CD4-positive, alpha-beta T cell (primary cell): ENCODE measurements at regions of chr1 and their contacts with region 1.

Region 1: GRCh38 chr1:151934048-151934493 is 24.8 kb upstream of the THEM4 start:
- DNase-seq: peak in 12 of 14 experiments; percentile 16 to 84 (median 31)
- ATAC-seq: peak; percentile 88
- H3K4me3 ChIP-seq: no peak overlapping the region
- H3K4me3 Mint-ChIP-seq: no peak overlapping the region
- H3K27ac ChIP-seq: no peak overlapping the region
- H3K27ac Mint-ChIP-seq: no peak overlapping the region
- H3K4me1 ChIP-seq: no peaks in the 10 kb centered on the region
- H3K4me1 Mint-ChIP-seq: peaks cover 6% of the 10 kb centered on the region
- H3K27me3 ChIP-seq: no peaks in the 10 kb centered on the region
- H3K27me3 Mint-ChIP-seq: no peaks in the 10 kb centered on the region
- CTCF ChIP-seq: peak; percentile 97

Region 2: GRCh38 chr1:151898513-151898991 is 35.5 kb before region 1 on chr1:
- CTCF ChIA-PET with region 1: interaction called, 15 read pairs
- POLR2A ChIA-PET with region 1: interaction called, 3 read pairs
- intact Hi-C with region 1: no loop called
- DNase-seq: peak; percentile 48 to 86 (median 68)
- ATAC-seq: peak; percentile 91
- H3K4me3 ChIP-seq: peak overlapping the region; percentile 39
- H3K4me3 Mint-ChIP-seq: peak overlapping the region; percentile 83
- H3K27ac ChIP-seq: peak overlapping the region; percentile 74 to 81
- H3K27ac Mint-ChIP-seq: peak overlapping the region; percentile 96
- H3K4me1 ChIP-seq: peaks cover 64% of the 10 kb centered on the region
- H3K4me1 Mint-ChIP-seq: peaks cover 79% of the 10 kb centered on the region
- H3K27me3 ChIP-seq: no peaks in the 10 kb centered on the region
- H3K27me3 Mint-ChIP-seq: no peaks in the 10 kb centered on the region
- CTCF ChIP-seq: no peak

Region 3: DNA sequence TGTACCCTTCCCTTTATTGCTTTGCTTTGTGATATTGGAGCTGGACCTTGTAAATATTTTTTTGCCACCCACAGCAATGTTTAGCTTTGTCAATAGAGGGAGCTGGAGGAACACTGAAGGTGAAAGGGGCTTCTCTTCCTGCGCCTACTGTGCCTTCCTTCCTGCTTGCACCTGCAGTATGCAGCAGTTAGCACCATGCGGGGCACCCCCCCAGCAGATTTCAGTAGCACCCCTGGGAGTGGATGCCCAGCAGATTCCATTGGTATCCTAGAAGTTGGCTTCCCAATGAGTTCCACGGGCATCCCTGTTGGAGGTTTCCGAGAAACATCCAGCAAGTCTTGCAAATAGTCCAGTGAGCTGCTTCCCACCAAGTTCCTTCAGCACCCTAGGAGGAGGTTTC is 34.0 kb after region 1 on chr1:
- CTCF ChIA-PET with region 1: interaction called, 43 read pairs
- POLR2A ChIA-PET with region 1: interaction called, 5 read pairs
- intact Hi-C with region 1: loop called (anchors 2 to 5 kb)
- DNase-seq: peak; percentile 20 to 83 (median 38)
- ATAC-seq: peak; percentile 99
- H3K4me3 ChIP-seq: no peak overlapping the region
- H3K4me3 Mint-ChIP-seq: no peak overlapping the region
- H3K27ac ChIP-seq: no peak overlapping the region
- H3K27ac Mint-ChIP-seq: no peak overlapping the region
- H3K4me1 ChIP-seq: peaks cover 9% of the 10 kb centered on the region
- H3K4me1 Mint-ChIP-seq: peaks cover 7% of the 10 kb centered on the region
- H3K27me3 ChIP-seq: no peaks in the 10 kb centered on the region
- H3K27me3 Mint-ChIP-seq: no peaks in the 10 kb centered on the region
- CTCF ChIP-seq: peak; percentile 72

Region 4: DNA sequence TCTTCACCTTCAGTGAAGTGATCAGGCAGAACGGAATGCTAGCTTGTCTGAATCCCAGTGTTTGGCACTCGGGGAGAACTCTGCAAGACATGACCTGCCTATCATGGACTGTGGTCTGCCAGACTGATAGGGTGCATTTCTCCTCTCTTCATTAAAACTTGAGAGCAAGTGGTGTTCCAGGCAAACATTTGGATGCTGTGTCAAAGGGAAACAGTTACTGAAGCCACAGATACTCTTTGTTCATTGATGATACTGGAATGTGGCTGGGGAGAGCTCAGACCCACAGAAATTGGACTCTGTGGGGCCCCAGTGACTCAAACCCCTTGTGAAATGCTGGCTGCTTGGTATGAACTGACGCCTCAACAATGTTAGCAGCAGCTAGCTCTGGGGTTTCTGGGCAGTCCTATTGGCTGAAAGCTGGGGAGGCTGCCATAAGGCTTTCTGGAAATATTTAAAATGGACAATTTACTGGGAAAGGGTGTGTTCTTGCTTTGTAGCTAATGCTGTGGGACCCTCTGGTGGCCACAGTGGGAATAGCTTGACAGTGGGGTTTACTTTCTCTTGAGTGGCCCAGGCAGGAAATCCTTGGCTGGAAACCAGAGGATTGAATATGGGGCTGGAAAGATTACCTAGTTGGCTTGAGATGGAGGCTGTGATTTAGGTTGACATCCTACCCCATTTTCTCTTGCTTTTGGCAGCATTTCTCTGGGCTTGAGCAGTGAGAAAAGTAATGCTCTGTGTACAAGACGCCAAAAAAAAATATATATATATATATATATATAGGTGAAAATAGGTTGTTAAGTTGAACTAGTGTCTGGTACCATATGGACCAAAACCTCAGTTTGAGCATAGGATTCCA is 67.5 kb after region 1 on chr1:
- CTCF ChIA-PET with region 1: interaction called, 39 read pairs
- POLR2A ChIA-PET with region 1: interaction called, 5 read pairs
- intact Hi-C with region 1: loop called (anchors 1 kb)
- DNase-seq: peak; percentile 62 to 86 (median 75)
- ATAC-seq: peak; percentile 87
- H3K4me3 ChIP-seq: no peak overlapping the region
- H3K4me3 Mint-ChIP-seq: no peak overlapping the region
- H3K27ac ChIP-seq: no peak overlapping the region
- H3K27ac Mint-ChIP-seq: no peak overlapping the region
- H3K4me1 ChIP-seq: peaks cover 9% of the 10 kb centered on the region
- H3K4me1 Mint-ChIP-seq: no peaks in the 10 kb centered on the region
- H3K27me3 ChIP-seq: no peaks in the 10 kb centered on the region
- H3K27me3 Mint-ChIP-seq: peaks cover 11% of the 10 kb centered on the region
- CTCF ChIP-seq: peak; percentile 95